Right ventricle myocardium inferior (tissue), 1 donor: ENCODE measurements at regions of chr18 and their contacts with region 1.

Region 1: DNA sequence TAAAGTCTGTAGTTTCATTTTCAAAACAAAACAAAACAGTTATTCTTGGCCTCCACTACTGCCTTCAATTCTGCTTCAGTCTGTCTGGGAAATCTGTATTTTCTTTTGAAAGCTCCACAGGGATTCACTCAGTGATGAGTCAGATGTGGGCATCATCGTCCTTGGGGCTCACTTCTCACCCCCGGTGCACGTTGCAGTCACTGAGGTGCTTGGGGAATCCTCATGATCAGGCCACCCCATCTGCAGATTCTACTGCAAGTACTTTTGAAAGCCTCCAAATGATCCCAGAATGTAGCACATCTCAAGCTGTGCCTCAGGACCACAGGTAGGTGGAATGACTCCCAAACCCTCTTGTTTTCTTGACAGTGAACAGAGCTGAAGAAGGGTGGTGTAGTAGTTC is 34.3 kb downstream of the LPIN2 start:
- DNase-seq: no peak
- ATAC-seq: peak; percentile 16

Region 2: GRCh38 chr18:2627821-2628276 is 350.8 kb before region 1 on chr18:
- intact Hi-C with region 1: no loop called
- DNase-seq: no peak
- ATAC-seq: no peak

Region 3: DNA sequence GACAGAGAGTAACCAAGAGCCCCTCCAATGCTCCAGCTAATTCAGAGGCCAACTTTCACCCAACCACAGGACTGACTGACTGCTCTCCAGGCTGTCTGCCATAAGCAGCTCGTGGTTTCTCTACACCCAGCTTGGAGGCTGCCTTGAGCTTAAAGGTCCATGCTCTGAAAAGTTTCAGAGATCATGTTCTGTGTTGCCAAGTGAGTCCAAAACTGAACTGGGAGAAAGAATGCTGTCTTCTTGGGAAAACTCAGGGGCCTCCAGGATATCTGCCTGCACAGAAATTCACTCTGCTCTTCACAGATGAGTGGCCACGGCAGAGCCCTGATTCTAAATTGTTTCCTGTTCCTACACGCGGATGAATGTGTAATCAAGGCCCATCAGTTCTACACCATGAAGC is 16.8 kb before region 1 on chr18:
- intact Hi-C with region 1: loop called (anchors 2 kb)
- DNase-seq: no peak
- ATAC-seq: peak; percentile 60